A549 (cell line): ENCODE measurements at regions of chr2 and their contacts with region 1.

Region 1: DNA sequence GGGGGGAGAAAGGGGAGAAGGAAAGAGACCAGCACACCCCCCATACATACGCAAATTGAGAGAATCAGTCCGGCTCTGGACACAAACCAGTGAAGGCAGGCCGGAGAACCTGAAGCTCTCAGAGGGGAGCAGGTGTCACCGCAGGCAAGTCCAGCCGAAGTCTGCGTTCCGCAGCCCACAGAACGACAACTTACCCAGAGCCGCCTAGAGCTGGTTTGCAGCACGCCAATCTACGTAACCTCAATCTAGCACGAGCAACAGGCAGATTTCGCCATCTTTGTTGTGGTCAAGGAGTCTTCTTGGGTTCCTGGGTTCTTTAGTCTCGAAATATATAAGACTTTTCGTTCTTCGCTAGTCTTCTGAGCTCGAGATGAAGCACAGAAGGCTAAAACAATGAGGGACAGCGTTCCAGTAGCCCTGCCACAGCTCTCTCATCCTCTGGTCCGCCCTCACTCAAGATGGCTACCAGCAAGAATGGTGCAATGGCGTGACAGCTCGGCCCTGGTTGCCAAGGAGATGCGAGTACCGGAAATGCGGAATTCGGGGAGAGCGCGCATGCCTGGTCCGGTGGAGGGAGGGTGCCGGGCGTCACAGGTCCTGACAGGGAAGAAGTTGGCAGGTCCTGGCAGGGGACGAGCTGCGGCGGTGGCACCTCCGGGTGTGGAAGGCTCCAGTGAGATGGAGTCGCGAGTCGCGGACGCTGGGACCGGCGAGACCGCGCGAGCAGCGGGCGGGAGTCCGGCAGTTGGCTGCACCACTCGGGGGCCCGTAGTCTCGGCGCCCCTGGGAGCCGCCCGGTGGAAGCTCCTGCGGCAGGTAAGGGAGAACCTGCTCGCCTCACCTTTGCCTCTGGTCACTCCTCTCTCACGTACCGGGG is at the starts of genes CAMKMT and PREPL:
- DNase-seq: peak; percentile 96 to 99
- ATAC-seq: peak; percentile 88 to 91
- H3K4me3 ChIP-seq: peak within 1 kb of the TSS; percentile 77
- H3K27ac ChIP-seq: peak within 1 kb of the TSS; percentile 93 to 94
- H3K4me1 ChIP-seq: peaks cover 20% of the 10 kb centered on the region
- CTCF ChIP-seq: no peak
- EP300 ChIP-seq: no peak
- POLR2A ChIP-seq: peak; percentile 92
- RAD21 ChIP-seq: no peak
- polyA plus RNA-seq, gene CAMKMT: 10.0 and 15.7 TPM in 2 replicates
- polyA plus RNA-seq, gene PREPL: 78.8 and 92.7 TPM in 2 replicates

Region 2: GRCh38 chr2:44342854-44343253 is 18.7 kb before region 1 on chr2:
- CTCF ChIA-PET with region 1: interaction called, 10 read pairs
- POLR2A ChIA-PET with region 1: interaction called, 5 read pairs
- DNase-seq: peak; percentile 28 to 66
- ATAC-seq: peak; percentile 62 to 81; a peak in 3 of 6 replicates
- H3K4me3 ChIP-seq: no peak overlapping the region
- H3K27ac ChIP-seq: no peak overlapping the region
- H3K4me1 ChIP-seq: no peaks in the 10 kb centered on the region
- CTCF ChIP-seq: peak; percentile 68
- EP300 ChIP-seq: no peak
- POLR2A ChIP-seq: no peak
- RAD21 ChIP-seq: peak; percentile 77 to 93

Region 3: DNA sequence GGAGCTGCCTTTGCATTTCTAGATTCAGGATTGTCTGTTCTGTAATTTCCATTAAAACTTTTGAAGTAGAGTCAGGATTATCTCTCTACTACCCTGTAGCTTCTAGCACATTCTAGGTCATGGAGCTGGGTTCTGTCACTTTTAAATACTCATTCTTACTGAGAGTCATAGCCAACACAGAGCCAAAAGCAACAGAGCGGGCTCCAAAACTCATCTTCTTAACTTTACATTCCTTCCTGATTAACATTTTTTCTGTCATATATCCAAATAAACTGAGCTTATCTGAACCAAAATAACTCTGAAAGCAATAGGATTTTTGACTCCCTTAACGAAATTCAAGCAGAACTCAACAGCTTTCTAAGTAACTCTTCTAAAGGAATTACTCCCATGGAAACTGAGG is 13.2 kb before region 1 on chr2:
- CTCF ChIA-PET with region 1: interaction called, 10 read pairs
- POLR2A ChIA-PET with region 1: interaction called, 11 read pairs
- DNase-seq: no peak
- ATAC-seq: no peak
- H3K4me3 ChIP-seq: no peak overlapping the region
- H3K27ac ChIP-seq: no peak overlapping the region
- H3K4me1 ChIP-seq: no peaks in the 10 kb centered on the region
- CTCF ChIP-seq: no peak
- EP300 ChIP-seq: no peak
- POLR2A ChIP-seq: no peak
- RAD21 ChIP-seq: no peak

Region 4: DNA sequence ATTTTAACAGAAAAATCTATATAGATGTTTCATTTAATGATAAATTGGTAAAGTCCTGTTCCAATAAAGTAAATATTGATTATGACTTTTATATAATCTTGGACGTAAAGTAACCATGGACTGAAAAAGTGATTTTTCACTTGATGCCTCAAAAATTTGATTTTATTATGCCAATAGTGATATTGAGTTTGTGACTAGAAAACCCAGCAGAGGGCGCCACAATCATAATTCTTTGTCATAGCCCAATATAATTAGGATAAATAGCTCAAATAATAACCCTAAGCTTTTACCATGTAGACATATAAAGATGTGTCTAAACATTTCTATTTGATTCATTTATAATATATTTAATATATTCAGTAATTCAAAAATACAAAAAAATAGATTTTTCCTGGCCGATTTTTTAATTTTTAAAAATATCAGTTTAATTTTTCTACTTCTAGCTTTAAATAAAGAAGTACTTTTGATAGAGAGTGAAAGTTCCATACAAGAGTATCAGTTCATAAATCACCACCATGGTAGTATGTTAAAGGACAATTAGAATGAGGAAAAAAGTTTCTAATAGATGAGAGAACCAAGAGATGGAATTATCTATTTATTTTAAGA is 30.9 kb after region 1 on chr2:
- CTCF ChIA-PET with region 1: interaction called, 11 read pairs
- POLR2A ChIA-PET with region 1: interaction called, 3 read pairs
- DNase-seq: peak; percentile 21 to 35
- ATAC-seq: no peak
- H3K4me3 ChIP-seq: no peak overlapping the region
- H3K27ac ChIP-seq: no peak overlapping the region
- H3K4me1 ChIP-seq: no peaks in the 10 kb centered on the region
- CTCF ChIP-seq: peak; percentile 95
- EP300 ChIP-seq: no peak
- POLR2A ChIP-seq: no peak
- RAD21 ChIP-seq: peak; percentile 75 to 82